Mammary epithelial cell (primary cell): ENCODE measurements at regions of chr16 and their contacts with region 1.

Region 1: GRCh38 chr16:50741808-50742575 is at the start of gene CYLD:
- DNase-seq: peak; percentile 100
- H3K4me3 ChIP-seq: peak within 1 kb of the TSS; percentile 75 to 86 (median 79)
- H3K27ac ChIP-seq: peak within 1 kb of the TSS; percentile 83
- H3K4me1 ChIP-seq: peaks cover 28% of the 10 kb centered on the region
- H3K27me3 ChIP-seq: no peaks in the 10 kb centered on the region
- CTCF ChIP-seq: no peak
- total RNA-seq, gene CYLD: 39.3 to 52.3 TPM

Region 2: DNA sequence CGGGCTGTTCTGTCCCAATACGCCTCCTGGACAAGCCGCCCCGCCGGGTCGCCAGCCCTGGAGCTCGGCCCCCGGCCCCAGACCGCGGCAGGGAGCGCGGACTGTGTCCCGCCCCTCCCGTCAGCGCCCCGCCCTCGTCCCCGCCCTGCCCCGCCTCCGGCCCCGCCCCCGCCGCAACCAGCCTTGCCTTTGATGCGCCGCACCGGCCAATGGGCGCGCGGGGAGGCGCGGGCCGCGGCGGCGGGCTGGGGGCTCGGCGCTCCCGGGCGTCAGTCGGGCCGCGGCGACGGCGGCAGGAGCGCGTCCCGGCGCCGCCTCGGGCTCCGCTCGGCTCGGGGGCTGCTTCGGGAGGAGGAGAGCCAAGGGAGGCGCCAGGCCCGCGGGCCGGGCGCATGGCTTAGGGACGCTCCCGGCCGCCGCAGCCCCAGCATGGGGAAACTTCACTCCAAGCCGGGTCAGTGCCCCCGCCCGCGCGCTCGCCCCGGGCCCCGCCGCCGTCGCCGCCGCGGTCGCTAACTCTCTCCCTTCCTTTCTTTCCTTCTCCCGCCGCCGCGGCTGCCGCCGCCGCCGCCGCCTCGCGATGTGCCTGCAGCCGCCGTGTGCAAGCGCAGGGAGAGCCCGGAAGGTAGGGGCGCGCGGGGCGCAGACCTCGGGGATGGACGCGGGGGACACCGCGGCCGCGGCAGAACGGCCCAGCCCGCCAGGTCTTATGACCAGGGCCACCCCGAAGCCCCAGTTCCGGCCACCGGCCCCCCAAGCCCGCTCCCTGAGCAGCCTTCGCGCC is 193.7 kb before region 1 on chr16 and contains the start of gene NKD1:
- CTCF ChIA-PET with region 1: no interaction called
- dilution Hi-C with region 1: no loop called
- in situ Hi-C with region 1: no loop called
- intact Hi-C with region 1: loop called (anchors 10 kb)
- DNase-seq: peak; percentile 41
- H3K4me3 ChIP-seq: peak within 1 kb of the TSS; percentile 66 to 82 (median 69)
- H3K27ac ChIP-seq: no peak within 1 kb of the TSS
- H3K4me1 ChIP-seq: peaks cover 4% of the 10 kb centered on the region
- H3K27me3 ChIP-seq: no peaks in the 10 kb centered on the region
- CTCF ChIP-seq: no peak
- total RNA-seq, gene NKD1: under 0.01 to 0.35 TPM

Region 3: DNA sequence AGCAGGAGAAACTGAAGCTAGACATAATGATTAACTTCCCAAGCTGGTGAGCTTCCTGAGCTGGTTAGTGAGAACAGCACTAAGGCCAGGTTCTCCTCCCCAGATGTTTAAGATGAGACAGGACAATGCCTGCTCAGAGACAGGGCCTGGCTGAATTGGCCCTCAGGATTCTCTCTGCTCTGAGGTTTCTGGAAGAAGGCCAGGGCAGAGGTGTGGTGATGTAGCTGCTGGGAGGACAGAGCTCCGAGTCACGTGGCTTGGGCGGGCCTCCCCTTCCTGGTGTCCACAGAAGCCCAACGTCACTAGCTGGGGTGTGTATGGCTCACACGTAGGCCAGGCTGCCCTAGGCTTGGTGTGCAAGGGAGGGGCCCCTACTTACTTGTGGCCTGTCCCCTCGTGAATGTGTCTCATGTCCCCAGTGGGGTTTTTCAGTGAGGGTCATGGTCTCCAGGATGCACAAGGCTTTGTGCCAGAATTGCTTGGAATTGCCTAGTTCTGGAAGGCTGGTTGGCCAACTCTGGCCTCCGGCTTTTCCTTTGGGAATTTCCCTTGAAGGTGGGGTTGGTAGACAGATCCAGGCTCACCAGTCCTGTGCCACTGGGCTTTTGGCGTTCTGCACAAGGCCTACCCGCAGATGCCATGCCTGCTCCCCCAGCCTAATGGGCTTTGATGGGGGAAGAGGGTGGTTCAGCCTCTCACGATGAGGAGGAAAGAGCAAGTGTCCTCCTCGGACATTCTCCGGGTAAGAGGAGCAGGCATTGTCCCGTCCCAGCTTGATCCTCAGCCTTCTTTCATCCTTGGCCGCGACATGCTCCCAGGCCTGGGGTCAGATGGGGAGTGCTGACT is 45.2 kb before region 1 on chr16:
- CTCF ChIA-PET with region 1: no interaction called
- dilution Hi-C with region 1: no loop called
- in situ Hi-C with region 1: loop called in 1 of 2 experiments (anchors 10 kb)
- intact Hi-C with region 1: loop called (anchors 1 kb)
- DNase-seq: peak; percentile 98
- H3K4me3 ChIP-seq: no peak overlapping the region
- H3K27ac ChIP-seq: peak overlapping the region; percentile 81
- H3K4me1 ChIP-seq: peaks cover 42% of the 10 kb centered on the region
- H3K27me3 ChIP-seq: no peaks in the 10 kb centered on the region
- CTCF ChIP-seq: no peak